Activated T-helper 2 cell treated with anti-CD3 and anti-CD28 coated beads, Interferon-gamma antibody, Interleukin-2, Interleukin-4, amounts not matched to agents 10 μg/mL and 5 μg/mL and 100 μg/mL, durations not matched to agents 14 hours and 24 hours and 36 hours (primary cell): ENCODE measurements at regions of chr10 and their contacts with region 1.

Region 1: GRCh38 chr10:95363303-95363912 is 72.6 kb upstream of the PDLIM1 start:
- DNase-seq: peak; percentile 32
- H3K4me3 Mint-ChIP-seq: no peak overlapping the region
- H3K27ac Mint-ChIP-seq: no peak overlapping the region
- H3K4me1 Mint-ChIP-seq: peaks cover 2% of the 10 kb centered on the region
- H3K27me3 Mint-ChIP-seq: peaks cover 17% of the 10 kb centered on the region

Region 2: DNA sequence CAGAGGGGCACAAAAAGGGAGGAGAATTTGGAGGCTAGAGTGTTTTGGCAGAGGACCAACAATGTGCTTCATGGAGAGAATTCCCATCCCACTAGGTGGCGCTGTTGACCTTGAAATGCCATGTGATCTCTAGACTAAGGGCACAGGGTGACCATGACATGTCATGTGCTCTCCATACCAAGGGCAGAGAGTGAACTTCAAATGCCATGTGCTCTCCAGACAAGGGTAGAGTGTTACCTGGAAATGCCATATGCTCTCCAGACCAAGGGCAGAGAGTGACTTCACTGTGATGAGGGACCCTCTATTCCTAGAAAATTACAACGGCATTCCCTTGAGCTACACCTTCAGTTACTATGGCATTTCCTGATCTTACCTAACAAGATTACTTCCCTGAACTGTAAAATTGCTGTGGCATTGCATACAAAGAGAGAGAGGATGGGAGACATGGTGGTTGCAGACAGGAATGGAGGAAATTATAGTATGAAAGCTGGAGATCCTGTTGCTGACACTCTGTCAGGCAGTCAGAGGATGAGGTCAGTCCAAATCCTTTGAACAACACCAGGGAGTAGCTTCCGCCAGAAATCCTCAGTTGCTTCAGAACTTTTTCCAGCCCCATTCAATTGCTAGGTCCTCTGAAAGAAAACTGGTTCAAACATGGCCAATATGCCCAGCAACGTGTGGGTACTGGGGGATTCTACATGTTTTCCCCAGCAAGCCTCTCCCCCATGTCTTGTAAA is 230.2 kb before region 1 on chr10:
- intact Hi-C with region 1: loop called (anchors 1 kb)
- DNase-seq: peak; percentile 61
- H3K4me3 Mint-ChIP-seq: no peak overlapping the region
- H3K27ac Mint-ChIP-seq: no peak overlapping the region
- H3K4me1 Mint-ChIP-seq: no peaks in the 10 kb centered on the region
- H3K27me3 Mint-ChIP-seq: peaks cover 1% of the 10 kb centered on the region

Region 3: DNA sequence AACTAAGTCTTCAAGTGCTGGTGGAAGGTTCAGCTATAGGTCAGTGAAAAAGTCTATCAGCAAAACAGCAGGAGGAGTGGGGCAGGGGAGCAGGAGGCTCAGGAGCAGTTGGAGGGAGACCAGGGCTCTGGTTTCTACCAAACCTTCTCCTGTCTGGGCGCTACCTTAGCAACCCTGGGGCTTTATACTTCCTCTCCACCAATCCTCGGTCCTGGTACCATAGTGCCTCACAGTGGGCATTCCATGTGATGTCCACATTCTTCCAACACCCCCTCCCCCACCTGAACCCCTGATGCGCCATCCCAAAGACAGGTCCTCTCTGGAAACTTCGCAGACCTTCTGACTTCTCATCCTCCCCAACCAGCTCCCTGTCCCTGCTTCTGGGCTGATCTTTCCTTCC is 194.7 kb before region 1 on chr10:
- intact Hi-C with region 1: no loop called
- DNase-seq: no peak
- H3K4me3 Mint-ChIP-seq: no peak overlapping the region
- H3K27ac Mint-ChIP-seq: no peak overlapping the region
- H3K4me1 Mint-ChIP-seq: no peaks in the 10 kb centered on the region
- H3K27me3 Mint-ChIP-seq: no peaks in the 10 kb centered on the region

Region 4: DNA sequence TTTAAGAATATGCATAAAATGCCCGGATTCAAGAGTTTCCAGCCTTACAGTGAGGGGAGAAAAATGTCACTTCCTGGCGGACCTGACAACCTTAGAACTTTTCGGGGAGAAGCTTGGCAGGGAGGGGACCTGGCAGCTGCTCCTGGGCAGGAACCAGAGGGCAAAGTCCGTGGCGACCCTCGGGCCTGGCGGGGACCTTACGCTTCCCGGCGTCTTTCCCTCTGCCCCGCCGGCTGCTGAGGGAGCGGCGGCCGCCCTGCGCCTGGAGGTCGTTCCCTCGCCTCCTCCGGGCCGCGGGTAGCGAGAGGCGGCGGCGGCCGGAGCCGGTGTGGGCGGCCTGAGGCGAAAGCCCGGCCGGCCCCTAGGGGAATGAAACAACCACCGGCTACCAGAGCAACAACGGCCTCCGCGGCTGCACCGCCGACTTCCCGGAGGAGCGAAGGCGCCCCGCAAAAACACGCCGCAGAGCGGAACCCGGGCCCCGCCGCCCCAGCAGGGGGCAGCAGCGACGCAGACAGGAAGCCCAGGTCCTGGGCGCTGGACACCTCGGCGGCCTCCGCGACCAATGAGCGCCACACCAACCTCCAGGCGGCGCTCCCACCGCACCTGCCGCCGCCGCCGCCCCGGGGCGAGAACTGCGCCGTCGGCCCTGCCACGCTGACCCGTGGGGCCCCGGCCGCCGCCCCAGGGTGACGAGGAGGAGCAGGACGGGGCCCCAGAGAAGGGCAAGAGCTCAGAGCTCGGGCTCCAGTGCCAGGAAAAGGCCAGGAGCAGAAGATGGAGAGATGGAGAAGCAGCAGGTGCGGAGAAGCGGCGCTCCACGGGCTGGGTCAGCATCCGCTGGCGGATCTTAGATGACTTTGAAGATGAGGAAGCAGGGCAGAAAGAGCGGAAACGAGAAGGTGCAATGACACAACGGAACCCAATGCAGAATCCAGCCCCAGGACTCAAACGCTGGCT is 179.9 kb before region 1 on chr10:
- intact Hi-C with region 1: loop called (anchors 1 kb)
- DNase-seq: peak; percentile 76
- H3K4me3 Mint-ChIP-seq: peak overlapping the region; percentile 79
- H3K27ac Mint-ChIP-seq: peak overlapping the region; percentile 43
- H3K4me1 Mint-ChIP-seq: peaks cover 6% of the 10 kb centered on the region
- H3K27me3 Mint-ChIP-seq: peaks cover 40% of the 10 kb centered on the region

Region 5: DNA sequence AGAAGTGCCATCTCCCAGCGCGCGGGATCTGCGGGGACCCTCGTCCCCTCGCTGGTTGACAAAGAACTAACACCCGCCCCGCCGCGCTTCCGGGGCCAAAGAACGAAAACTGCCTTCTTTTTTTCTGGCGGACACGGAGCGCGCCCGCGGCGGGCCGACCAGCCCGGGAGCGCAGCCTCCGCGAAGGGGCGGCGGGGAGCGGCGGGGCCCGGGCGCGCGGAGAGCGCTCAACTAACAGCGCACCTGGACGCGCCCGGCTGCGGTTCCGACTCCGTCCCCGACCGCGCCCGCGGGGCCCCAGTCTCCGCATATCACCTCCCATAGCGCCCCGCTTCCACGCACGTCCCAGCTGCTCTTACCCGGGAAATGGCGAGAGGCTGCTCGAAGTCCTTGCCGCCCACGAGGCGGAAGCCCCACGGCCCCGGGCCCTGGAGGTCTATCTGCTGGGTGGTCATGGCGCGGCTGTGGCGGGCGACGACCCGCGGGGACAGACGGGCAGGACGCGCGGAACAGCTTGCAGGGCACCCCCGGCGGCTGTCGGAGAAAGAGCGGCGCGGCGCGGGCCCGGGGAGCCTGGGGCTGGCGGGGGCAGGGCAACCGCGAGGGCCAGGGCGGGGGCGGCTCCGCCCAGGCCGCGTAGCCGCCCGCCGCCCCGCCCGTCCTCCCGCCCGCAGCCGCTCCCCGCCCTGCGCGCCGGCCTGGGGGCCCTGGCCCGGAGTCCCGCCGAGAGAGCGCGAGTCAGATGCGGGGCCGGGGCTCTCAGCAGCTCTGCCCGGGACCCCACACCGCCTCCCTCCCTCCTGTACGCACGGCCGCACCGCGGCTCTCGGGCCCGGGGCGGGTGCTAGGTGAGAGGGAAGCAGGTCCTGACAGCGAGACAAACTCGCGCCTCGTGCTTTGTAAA is 72.7 kb before region 1 on chr10 and contains the start of gene PDLIM1:
- intact Hi-C with region 1: loop called (anchors 5 kb)
- DNase-seq: peak; percentile 59
- H3K4me3 Mint-ChIP-seq: peak within 1 kb of the TSS; percentile 78
- H3K27ac Mint-ChIP-seq: no peak within 1 kb of the TSS
- H3K4me1 Mint-ChIP-seq: peaks cover 27% of the 10 kb centered on the region
- H3K27me3 Mint-ChIP-seq: peaks cover 45% of the 10 kb centered on the region
- total RNA-seq, gene PDLIM1: 2.7 and 2.9 TPM in 2 replicates

Region 6: DNA sequence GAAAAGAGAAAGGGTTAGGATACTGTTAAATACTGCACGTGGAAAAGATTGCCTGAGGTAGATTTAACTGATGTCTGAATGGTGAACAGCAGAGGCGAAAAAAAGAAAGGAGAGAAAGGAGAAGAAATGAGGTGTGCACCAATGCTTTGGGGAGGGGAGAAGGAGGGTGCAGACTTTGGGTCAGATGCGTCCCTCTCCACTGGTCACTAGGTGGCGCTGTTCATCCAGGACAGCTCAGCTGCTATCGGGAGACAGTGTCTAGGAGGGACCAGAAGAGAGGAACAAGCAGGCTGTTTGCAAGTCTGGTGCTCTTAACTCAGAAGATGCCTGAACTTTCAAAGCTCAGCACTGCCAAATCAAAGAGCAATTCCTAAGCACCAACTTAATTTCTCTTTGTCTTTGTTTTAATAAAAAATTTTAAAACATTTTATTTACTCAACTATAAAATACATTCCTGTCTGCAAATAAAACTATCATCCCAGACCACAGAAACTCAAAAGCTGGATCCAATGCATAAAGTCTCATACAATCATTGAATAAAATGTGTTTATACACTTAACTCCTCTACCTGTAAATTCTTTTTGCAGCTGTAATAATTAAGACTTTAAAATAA is 11.3 kb after region 1 on chr10:
- intact Hi-C with region 1: no loop called
- DNase-seq: peak; percentile 59
- H3K4me3 Mint-ChIP-seq: no peak overlapping the region
- H3K27ac Mint-ChIP-seq: no peak overlapping the region
- H3K4me1 Mint-ChIP-seq: peaks cover 2% of the 10 kb centered on the region
- H3K27me3 Mint-ChIP-seq: peaks cover 53% of the 10 kb centered on the region